Naive thymus-derived CD4-positive, alpha-beta T cell (primary cell): ENCODE measurements at regions of chr15 and their contacts with region 1.

Region 1: GRCh38 chr15:69755551-69756310 is 303.1 kb downstream of the RPLP1 start:
- DNase-seq: peak in 8 of 9 donors; percentile 61 to 79 (median 68)
- ATAC-seq: peak; percentile 62
- H3K4me3 ChIP-seq: peak overlapping the region; percentile 14
- H3K4me3 Mint-ChIP-seq: peak overlapping the region; percentile 39 to 81 (median 74)
- H3K27ac ChIP-seq: no peak overlapping the region
- H3K27ac Mint-ChIP-seq: peak overlapping the region; percentile 5 to 87 (median 48)
- H3K4me1 ChIP-seq: peaks cover 67 to 70% of the 10 kb centered on the region in 2 donors
- H3K4me1 Mint-ChIP-seq: peaks cover 72 to 91% (median 83%) of the 10 kb centered on the region in 7 donors
- H3K27me3 ChIP-seq: no peaks in the 10 kb centered on the region
- H3K27me3 Mint-ChIP-seq: peaks cover 0 to 19% (median 9%) of the 10 kb centered on the region in 5 donors

Region 2: GRCh38 chr15:68650901-68651709 is 1104.6 kb before region 1 on chr15:
- CTCF ChIA-PET with region 1: no interaction called
- POLR2A ChIA-PET with region 1: no interaction called
- intact Hi-C with region 1: no loop called
- DNase-seq: peak in 7 of 9 donors; percentile 10 to 70 (median 18)
- ATAC-seq: peak; percentile 78
- H3K4me3 ChIP-seq: no peak overlapping the region
- H3K4me3 Mint-ChIP-seq: no peak overlapping the region
- H3K27ac ChIP-seq: no peak overlapping the region
- H3K27ac Mint-ChIP-seq: no peak overlapping the region
- H3K4me1 ChIP-seq: no peaks in the 10 kb centered on the region
- H3K4me1 Mint-ChIP-seq: no peaks in the 10 kb centered on the region
- H3K27me3 ChIP-seq: no peaks in the 10 kb centered on the region
- H3K27me3 Mint-ChIP-seq: peaks cover 0 to 6% (median 4%) of the 10 kb centered on the region in 5 donors

Region 3: GRCh38 chr15:69225355-69226025 is 530.2 kb before region 1 on chr15:
- CTCF ChIA-PET with region 1: no interaction called
- POLR2A ChIA-PET with region 1: no interaction called
- intact Hi-C with region 1: no loop called
- DNase-seq: no peak
- ATAC-seq: no peak
- H3K4me3 ChIP-seq: no peak overlapping the region
- H3K4me3 Mint-ChIP-seq: no peak overlapping the region
- H3K27ac ChIP-seq: no peak overlapping the region
- H3K27ac Mint-ChIP-seq: no peak overlapping the region
- H3K4me1 ChIP-seq: no peaks in the 10 kb centered on the region
- H3K4me1 Mint-ChIP-seq: no peaks in the 10 kb centered on the region
- H3K27me3 ChIP-seq: no peaks in the 10 kb centered on the region
- H3K27me3 Mint-ChIP-seq: peaks cover 0 to 4% (median 0%) of the 10 kb centered on the region in 5 donors

Region 4: GRCh38 chr15:69452692-69453521 is 302.8 kb before region 1 on chr15 and contains the start of gene RPLP1:
- CTCF ChIA-PET with region 1: no interaction called
- POLR2A ChIA-PET with region 1: no interaction called
- intact Hi-C with region 1: loop called in 1 of 2 experiments (anchors 5 kb)
- DNase-seq: peak; percentile 93 to 97 (median 96)
- ATAC-seq: peak; percentile 93
- H3K4me3 ChIP-seq: peak within 1 kb of the TSS; percentile 82
- H3K4me3 Mint-ChIP-seq: peak within 1 kb of the TSS; percentile 91 to 100 (median 99)
- H3K27ac ChIP-seq: peak within 1 kb of the TSS; percentile 84
- H3K27ac Mint-ChIP-seq: peak within 1 kb of the TSS; percentile 96 to 100 (median 98)
- H3K4me1 ChIP-seq: peaks cover 14 to 33% of the 10 kb centered on the region in 2 donors
- H3K4me1 Mint-ChIP-seq: peaks cover 29 to 52% (median 42%) of the 10 kb centered on the region in 7 donors
- H3K27me3 ChIP-seq: no peaks in the 10 kb centered on the region
- H3K27me3 Mint-ChIP-seq: no peaks in the 10 kb centered on the region
- total RNA-seq, gene RPLP1: 1,719 to 2,941 (median 2,467) TPM

Region 5: DNA sequence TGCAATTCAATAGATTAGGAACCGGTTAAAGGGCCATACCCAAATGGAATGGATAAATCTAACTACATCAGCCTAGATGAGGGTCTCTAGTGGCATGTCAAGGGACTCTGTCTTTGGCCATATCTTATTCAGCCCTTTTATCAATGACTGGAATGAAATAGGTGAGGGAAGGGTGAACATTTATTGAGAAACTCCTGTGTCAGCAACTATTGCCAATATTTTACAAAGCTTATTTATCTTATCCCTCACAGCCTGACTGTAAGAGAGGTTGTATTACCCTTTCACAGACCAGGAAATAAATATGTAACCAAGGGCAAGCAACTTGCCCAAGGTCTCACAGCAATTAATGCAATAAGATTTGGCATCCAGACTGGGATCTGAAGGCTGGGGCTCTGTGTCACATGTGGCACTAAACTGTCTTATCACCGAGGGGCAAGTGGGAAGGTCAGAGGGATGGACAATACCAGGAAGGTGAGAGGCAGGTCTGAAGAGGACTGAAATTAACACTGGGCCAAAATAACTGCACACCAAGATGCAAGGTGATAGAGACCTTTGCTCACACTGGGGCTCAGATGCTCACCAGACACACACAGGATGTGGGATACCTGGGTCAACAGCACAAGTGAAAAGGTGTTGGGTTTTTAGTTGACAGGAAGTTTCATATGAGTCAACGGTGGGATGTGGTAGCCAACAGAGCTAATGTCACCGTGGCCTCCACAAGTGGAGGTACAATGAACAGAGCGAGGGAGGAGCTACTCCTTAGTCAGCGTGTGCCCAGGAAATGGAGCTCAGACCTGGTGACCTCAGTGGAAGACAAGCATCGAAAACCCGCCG is 41.8 kb before region 1 on chr15:
- CTCF ChIA-PET with region 1: interaction called, 3 read pairs
- POLR2A ChIA-PET with region 1: interaction called, 10 read pairs
- intact Hi-C with region 1: loop called (anchors 1 kb)
- DNase-seq: peak in 8 of 9 donors; percentile 60 to 80 (median 70)
- ATAC-seq: peak; percentile 88
- H3K4me3 ChIP-seq: no peak overlapping the region
- H3K4me3 Mint-ChIP-seq: peak overlapping the region; percentile 52 to 80 (median 72)
- H3K27ac ChIP-seq: no peak overlapping the region
- H3K27ac Mint-ChIP-seq: peak overlapping the region; percentile 71 to 90 (median 78)
- H3K4me1 ChIP-seq: peaks cover 32 to 50% of the 10 kb centered on the region in 2 donors
- H3K4me1 Mint-ChIP-seq: peaks cover 31 to 63% (median 54%) of the 10 kb centered on the region in 7 donors
- H3K27me3 ChIP-seq: no peaks in the 10 kb centered on the region
- H3K27me3 Mint-ChIP-seq: peaks cover 0 to 22% (median 0%) of the 10 kb centered on the region in 5 donors

Region 6: DNA sequence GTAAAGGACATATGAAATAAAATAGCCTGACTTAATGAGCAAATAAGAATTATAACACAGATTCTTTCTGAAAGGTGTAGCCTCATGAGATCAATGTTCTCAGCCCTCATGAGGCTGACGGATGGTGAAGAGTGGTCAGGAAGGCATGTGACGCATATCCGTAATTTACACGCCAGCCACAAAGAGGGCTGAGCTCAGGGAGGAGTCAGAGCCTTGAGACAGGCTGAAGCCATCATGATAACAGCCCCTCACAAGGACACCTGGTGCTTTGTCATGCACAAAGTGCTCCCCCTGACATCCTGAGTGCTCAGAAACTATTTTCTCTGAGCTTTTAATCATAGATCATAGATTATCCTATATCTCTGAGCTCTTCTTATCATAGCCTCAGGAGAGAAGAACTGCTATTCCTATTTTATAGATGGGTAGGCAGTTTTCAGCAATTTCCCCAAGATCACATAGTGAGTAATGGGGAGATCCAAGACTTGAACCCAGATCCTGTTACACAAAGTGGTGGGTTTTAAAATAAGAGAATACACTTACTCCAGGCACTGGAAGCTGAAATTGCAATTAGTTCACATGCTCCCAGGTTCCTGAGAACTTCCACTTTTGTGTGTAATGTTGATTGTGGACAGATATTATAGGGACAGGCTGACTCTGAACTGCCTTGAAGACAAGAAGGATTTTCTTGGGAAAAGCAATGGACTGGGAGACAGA is 36.0 kb before region 1 on chr15:
- CTCF ChIA-PET with region 1: interaction called, 5 read pairs
- POLR2A ChIA-PET with region 1: interaction called, 10 read pairs
- intact Hi-C with region 1: loop called (anchors 1 kb)
- DNase-seq: peak in 7 of 9 donors; percentile 26 to 49 (median 42)
- ATAC-seq: peak; percentile 87
- H3K4me3 ChIP-seq: no peak overlapping the region
- H3K4me3 Mint-ChIP-seq: peak overlapping the region in 9 of 10 donors; percentile 25 to 80 (median 46)
- H3K27ac ChIP-seq: no peak overlapping the region
- H3K27ac Mint-ChIP-seq: peak overlapping the region in 8 of 9 donors; percentile 14 to 96 (median 63)
- H3K4me1 ChIP-seq: peaks cover 62 to 76% of the 10 kb centered on the region in 2 donors
- H3K4me1 Mint-ChIP-seq: peaks cover 63 to 95% (median 88%) of the 10 kb centered on the region in 7 donors
- H3K27me3 ChIP-seq: no peaks in the 10 kb centered on the region
- H3K27me3 Mint-ChIP-seq: peaks cover 0 to 46% (median 0%) of the 10 kb centered on the region in 5 donors

Region 7: GRCh38 chr15:69729161-69729748 is 26.5 kb before region 1 on chr15:
- CTCF ChIA-PET with region 1: interaction called, 5 read pairs
- POLR2A ChIA-PET with region 1: interaction called, 4 read pairs
- intact Hi-C with region 1: loop called (anchors 1 to 2 kb)
- DNase-seq: peak; percentile 38 to 79 (median 61)
- ATAC-seq: peak; percentile 53
- H3K4me3 ChIP-seq: no peak overlapping the region
- H3K4me3 Mint-ChIP-seq: no peak overlapping the region
- H3K27ac ChIP-seq: no peak overlapping the region
- H3K27ac Mint-ChIP-seq: peak overlapping the region in 3 of 9 donors; percentile 5 to 22 (median 19)
- H3K4me1 ChIP-seq: peaks cover 0 to 12% of the 10 kb centered on the region in 2 donors
- H3K4me1 Mint-ChIP-seq: peaks cover 13 to 64% (median 23%) of the 10 kb centered on the region in 7 donors
- H3K27me3 ChIP-seq: no peaks in the 10 kb centered on the region
- H3K27me3 Mint-ChIP-seq: peaks cover 0 to 30% (median 0%) of the 10 kb centered on the region in 5 donors

Region 8: GRCh38 chr15:70299931-70300869 is 544.5 kb after region 1 on chr15:
- CTCF ChIA-PET with region 1: no interaction called
- POLR2A ChIA-PET with region 1: no interaction called
- intact Hi-C with region 1: loop called in 1 of 2 experiments (anchors 5 kb)
- DNase-seq: peak in 7 of 9 donors; percentile 2 to 56 (median 20)
- ATAC-seq: peak; percentile 96
- H3K4me3 ChIP-seq: peak overlapping the region; percentile 31
- H3K4me3 Mint-ChIP-seq: peak overlapping the region in 8 of 10 donors; percentile 20 to 64 (median 40)
- H3K27ac ChIP-seq: no peak overlapping the region
- H3K27ac Mint-ChIP-seq: peak overlapping the region in 5 of 9 donors; percentile 6 to 57 (median 20)
- H3K4me1 ChIP-seq: peaks cover 20 to 28% of the 10 kb centered on the region in 2 donors
- H3K4me1 Mint-ChIP-seq: peaks cover 5 to 13% (median 10%) of the 10 kb centered on the region in 7 donors
- H3K27me3 ChIP-seq: no peaks in the 10 kb centered on the region
- H3K27me3 Mint-ChIP-seq: peaks cover 0 to 25% (median 0%) of the 10 kb centered on the region in 5 donors

Region 9: GRCh38 chr15:70670680-70671079 is 914.9 kb after region 1 on chr15:
- CTCF ChIA-PET with region 1: no interaction called
- POLR2A ChIA-PET with region 1: no interaction called
- intact Hi-C with region 1: loop called in 1 of 2 experiments (anchors 5 kb)
- DNase-seq: peak in 4 of 9 donors; percentile 13 to 24 (median 20)
- ATAC-seq: no peak
- H3K4me3 ChIP-seq: no peak overlapping the region
- H3K4me3 Mint-ChIP-seq: no peak overlapping the region
- H3K27ac ChIP-seq: no peak overlapping the region
- H3K27ac Mint-ChIP-seq: no peak overlapping the region
- H3K4me1 ChIP-seq: peaks cover 12 to 19% of the 10 kb centered on the region in 2 donors
- H3K4me1 Mint-ChIP-seq: peaks cover 13 to 32% (median 24%) of the 10 kb centered on the region in 7 donors
- H3K27me3 ChIP-seq: no peaks in the 10 kb centered on the region
- H3K27me3 Mint-ChIP-seq: peaks cover 0 to 29% (median 4%) of the 10 kb centered on the region in 5 donors